CD8-positive, alpha-beta T cell (primary cell): ENCODE measurements at regions of chr2 and their contacts with region 1.

Region 1: DNA sequence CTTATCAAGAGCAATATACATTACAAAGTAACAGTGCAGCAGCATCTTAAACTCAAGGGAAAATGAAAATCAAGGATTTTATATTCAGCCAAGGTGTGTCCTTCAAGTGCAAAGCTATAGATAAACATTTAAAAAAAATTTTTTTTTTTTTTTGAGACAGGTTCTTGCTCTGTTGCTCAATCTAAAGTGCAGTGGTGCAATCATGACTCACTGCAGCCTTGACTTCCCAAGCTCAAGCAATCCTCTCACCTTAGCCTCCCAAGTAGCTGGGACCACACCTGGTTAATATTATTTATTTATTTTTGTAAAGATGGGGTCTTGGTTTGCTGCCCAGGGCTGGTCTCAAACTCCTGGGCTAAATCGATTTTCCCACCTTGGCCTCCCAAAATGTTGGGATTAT is 9.0 kb downstream of the CDKL4 start:
- DNase-seq: no peak
- ATAC-seq: no peak
- H3K4me3 ChIP-seq: no peak overlapping the region
- H3K4me3 Mint-ChIP-seq: no peak overlapping the region
- H3K27ac ChIP-seq: no peak overlapping the region
- H3K27ac Mint-ChIP-seq: no peak overlapping the region
- H3K4me1 ChIP-seq: peaks cover under 1% of the 10 kb centered on the region
- H3K4me1 Mint-ChIP-seq: peaks cover 2% of the 10 kb centered on the region
- H3K27me3 ChIP-seq: no peaks in the 10 kb centered on the region
- H3K27me3 Mint-ChIP-seq: peaks cover 3% of the 10 kb centered on the region
- CTCF ChIP-seq: no peak

Region 2: GRCh38 chr2:39059366-39059952 is 175.3 kb before region 1 on chr2:
- CTCF ChIA-PET with region 1: interaction called, 268 read pairs
- POLR2A ChIA-PET with region 1: no interaction called
- intact Hi-C with region 1: loop called in 1 of 2 experiments (anchors 1 kb)
- DNase-seq: peak in 2 of 9 experiments; percentile 63 to 74
- ATAC-seq: no peak
- H3K4me3 ChIP-seq: no peak overlapping the region
- H3K4me3 Mint-ChIP-seq: no peak overlapping the region
- H3K27ac ChIP-seq: no peak overlapping the region
- H3K27ac Mint-ChIP-seq: peak overlapping the region; percentile 16
- H3K4me1 ChIP-seq: no peaks in the 10 kb centered on the region
- H3K4me1 Mint-ChIP-seq: peaks cover 3% of the 10 kb centered on the region
- H3K27me3 ChIP-seq: no peaks in the 10 kb centered on the region
- H3K27me3 Mint-ChIP-seq: no peaks in the 10 kb centered on the region
- CTCF ChIP-seq: peak; percentile 97

Region 3: DNA sequence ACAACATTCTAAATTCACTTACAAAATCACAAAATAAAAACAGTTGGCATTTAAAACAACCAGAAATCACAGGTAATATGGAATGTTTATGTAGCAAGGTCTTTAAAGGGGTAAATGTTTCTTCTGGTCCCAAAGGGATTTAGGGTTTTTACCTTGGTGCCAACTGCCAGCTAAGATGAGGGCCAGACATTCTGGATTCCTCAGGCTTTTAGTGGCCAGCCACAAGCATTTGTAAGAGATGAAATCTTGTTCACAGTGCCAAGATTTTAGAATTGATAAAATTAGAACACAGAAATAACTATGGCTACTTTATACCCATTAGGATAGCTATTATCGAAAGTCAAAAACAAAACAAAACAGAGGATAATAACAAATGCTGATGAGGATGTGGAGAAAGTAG is 69.4 kb after region 1 on chr2:
- CTCF ChIA-PET with region 1: no interaction called
- POLR2A ChIA-PET with region 1: no interaction called
- intact Hi-C with region 1: no loop called
- DNase-seq: no peak
- ATAC-seq: no peak
- H3K4me3 ChIP-seq: no peak overlapping the region
- H3K4me3 Mint-ChIP-seq: no peak overlapping the region
- H3K27ac ChIP-seq: no peak overlapping the region
- H3K27ac Mint-ChIP-seq: no peak overlapping the region
- H3K4me1 ChIP-seq: no peaks in the 10 kb centered on the region
- H3K4me1 Mint-ChIP-seq: no peaks in the 10 kb centered on the region
- H3K27me3 ChIP-seq: no peaks in the 10 kb centered on the region
- H3K27me3 Mint-ChIP-seq: no peaks in the 10 kb centered on the region
- CTCF ChIP-seq: no peak